Caco-2 (cell line): ENCODE measurements at regions of chr12 and their contacts with region 1.

Region 1: GRCh38 chr12:40970320-40970907 is 217.7 kb upstream of the PDZRN4 start:
- DNase-seq: peak in 1 of 2 experiments; percentile 9
- H3K4me3 ChIP-seq: no peak overlapping the region
- H3K4me3 Mint-ChIP-seq: no peak overlapping the region
- H3K27ac Mint-ChIP-seq: no peak overlapping the region
- H3K4me1 ChIP-seq: no peaks in the 10 kb centered on the region
- H3K4me1 Mint-ChIP-seq: no peaks in the 10 kb centered on the region
- H3K27me3 ChIP-seq: no peaks in the 10 kb centered on the region; the same call in none of the 2 replicates
- H3K27me3 Mint-ChIP-seq: no peaks in the 10 kb centered on the region
- CTCF ChIP-seq: peak in 1 of 2 experiments; percentile 24

Region 2: DNA sequence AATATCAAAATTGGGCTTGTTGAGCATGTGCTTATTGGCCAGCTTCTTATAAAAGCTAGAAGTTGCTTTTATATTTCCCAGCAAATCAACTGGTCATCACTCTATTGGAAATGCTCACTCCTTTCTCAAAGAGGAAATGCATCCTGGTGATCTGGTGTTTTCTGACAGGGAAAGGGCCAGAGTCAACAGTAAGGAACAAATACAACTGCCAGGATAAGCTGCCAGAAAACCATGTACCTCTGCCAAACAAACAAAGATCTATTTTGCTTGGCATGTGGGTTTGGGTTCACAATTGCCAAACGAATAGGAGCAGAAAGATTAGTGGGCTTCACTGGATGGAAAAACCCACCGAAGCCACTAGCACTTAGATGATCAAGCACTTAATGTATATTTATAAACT is 90.8 kb after region 1 on chr12:
- CTCF ChIA-PET with region 1: no interaction called
- POLR2A ChIA-PET with region 1: no interaction called
- intact Hi-C with region 1: loop called (anchors 10 kb)
- DNase-seq: no peak
- H3K4me3 ChIP-seq: no peak overlapping the region
- H3K4me3 Mint-ChIP-seq: no peak overlapping the region
- H3K27ac Mint-ChIP-seq: no peak overlapping the region
- H3K4me1 ChIP-seq: no peaks in the 10 kb centered on the region
- H3K4me1 Mint-ChIP-seq: no peaks in the 10 kb centered on the region
- H3K27me3 ChIP-seq: no peaks in the 10 kb centered on the region
- H3K27me3 Mint-ChIP-seq: peaks cover 4% of the 10 kb centered on the region
- CTCF ChIP-seq: no peak